Posterior vena cava (tissue), 2 donors: ENCODE measurements at regions of chr1 and their contacts with region 1.

Region 1: DNA sequence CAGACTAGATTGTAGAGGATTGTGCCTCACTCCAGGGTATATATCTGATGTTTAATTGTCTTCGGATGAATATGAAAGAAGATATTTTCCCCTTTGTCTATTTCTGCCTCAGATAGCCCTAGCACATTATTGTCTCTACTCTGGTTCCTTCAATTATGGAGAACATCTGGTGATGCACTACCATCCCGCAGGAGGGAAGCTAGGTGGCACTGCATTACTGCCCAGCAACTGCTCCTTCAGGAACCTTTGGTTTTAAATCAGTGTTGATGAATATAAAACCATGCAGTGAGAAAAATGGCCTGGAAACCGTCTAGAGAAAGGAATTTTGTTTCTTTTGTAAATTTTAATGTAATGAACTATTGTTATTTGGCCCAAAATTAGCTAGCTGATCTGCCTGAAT is 68.5 kb downstream of the GPR88 start:
- DNase-seq: no peak

Region 2: GRCh38 chr1:100671601-100672000 is 65.2 kb after region 1 on chr1:
- intact Hi-C with region 1: no loop called
- DNase-seq: no peak

Region 3: DNA sequence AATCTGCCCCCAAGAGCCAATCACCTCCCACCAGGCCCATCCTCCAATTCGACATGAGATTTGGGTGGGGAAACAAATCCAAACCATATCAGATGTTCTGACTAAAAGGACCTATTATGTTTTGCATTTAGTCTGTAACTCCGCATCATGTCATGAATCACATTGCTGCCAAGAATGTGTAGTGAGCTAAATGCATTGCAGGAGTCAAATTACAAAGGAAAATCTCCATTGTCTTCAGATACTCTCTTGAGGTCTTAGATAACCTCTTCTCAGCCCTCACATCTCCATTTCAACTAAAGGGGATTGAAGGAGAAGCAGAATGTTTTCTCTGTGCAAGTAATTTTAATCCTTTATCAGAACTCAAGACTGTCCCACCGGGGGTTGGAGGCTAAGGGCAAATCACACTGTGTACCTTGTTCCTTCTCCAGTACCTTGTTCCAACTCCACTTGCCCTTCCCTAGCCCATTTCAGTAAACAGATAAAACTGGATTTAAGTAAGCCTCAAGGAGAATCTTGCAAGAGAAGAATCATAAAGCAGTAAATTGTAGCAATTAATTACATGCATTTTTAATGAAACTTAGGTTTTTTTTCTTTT is 254.1 kb after region 1 on chr1:
- intact Hi-C with region 1: loop called (anchors 5 to 10 kb)
- DNase-seq: no peak

Region 4: DNA sequence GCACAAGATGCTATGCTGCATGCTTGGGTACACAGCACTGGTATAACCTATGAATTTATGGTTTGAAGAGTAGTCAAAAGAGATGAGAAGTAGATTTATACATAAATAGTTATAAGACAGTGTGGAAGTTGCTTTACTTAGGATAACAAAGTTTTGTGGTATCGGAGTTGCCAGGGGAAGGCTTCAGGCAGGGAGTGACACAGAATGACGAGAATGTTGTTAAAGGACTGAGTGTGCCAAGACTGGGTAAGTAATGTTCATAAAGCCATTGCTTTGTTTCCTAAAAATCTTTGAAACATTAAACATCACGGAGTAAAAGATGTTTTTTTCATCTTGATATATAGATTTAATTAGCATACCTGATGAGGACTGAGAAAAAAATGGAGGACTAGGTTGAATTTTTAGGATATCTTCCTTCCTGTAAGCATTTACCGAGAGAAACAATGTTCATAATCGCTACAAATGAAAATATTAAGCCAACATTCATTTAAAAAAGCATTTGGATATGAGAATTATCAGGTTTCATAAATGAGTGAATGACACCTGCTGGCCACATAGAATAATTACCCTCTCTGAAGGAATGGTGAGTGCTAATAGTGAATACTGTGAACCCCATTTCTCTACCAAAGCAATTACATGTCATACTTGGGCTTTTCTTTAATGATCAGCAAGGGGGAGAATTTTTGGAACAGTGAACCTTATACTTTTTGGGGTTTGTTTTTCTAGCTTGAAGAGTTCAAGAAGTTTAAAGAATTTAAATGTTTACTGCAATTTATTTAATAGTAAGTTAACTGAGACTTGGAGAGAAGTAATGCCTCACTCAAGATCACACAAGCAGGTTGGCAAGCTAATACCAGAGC is 259.8 kb after region 1 on chr1:
- intact Hi-C with region 1: loop called (anchors 5 to 10 kb)
- DNase-seq: no peak

Region 5: DNA sequence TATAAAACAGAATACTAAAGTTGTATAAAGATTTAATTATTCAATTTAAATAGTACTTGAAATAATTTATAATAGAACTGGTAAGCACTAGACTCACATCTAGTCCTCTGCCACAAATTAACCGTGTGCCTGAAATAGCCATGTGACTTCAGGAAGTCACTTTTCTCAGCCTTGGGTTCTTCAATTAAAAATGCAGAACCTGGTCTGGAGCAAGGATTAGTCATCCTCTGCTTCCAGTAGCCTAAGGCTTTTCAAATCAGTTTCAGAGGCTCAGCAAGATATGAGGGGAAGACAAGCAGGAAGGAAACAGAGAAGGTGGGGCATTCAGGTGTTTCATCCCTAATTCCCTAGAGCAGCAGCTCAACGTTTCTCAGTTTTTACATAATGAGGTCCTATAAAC is 396.1 kb after region 1 on chr1:
- intact Hi-C with region 1: no loop called
- DNase-seq: no peak